ENCODE measurements at regions of chr11 and their contacts with region 1.

Region 1: GRCh38 chr11:62427630-62428233 is 8.9 kb downstream of the SCGB1A1 start:
- DNase-seq: no peak
- H3K4me3 ChIP-seq: no peak overlapping the region
- H3K27ac ChIP-seq: no peak overlapping the region
- H3K4me1 ChIP-seq: no peaks in the 10 kb centered on the region
- H3K27me3 ChIP-seq: peaks cover 0 to 3% of the 10 kb centered on the region in 2 experiments
- CTCF ChIP-seq: no peak
- POLR2A ChIP-seq: no peak

Region 2: GRCh38 chr11:61792310-61793085 is 635.2 kb before region 1 on chr11 and contains the starts of genes FEN1 and TMEM258:
- CTCF ChIA-PET with region 1: no interaction called
- POLR2A ChIA-PET with region 1: no interaction called
- dilution Hi-C with region 1: no loop called
- intact Hi-C with region 1: no loop called
- DNase-seq: peak; percentile 98
- H3K4me3 ChIP-seq: peak within 1 kb of the TSS; percentile 70 to 91 (median 83)
- H3K27ac ChIP-seq: peak within 1 kb of the TSS; percentile 99
- H3K4me1 ChIP-seq: peaks cover 18% of the 10 kb centered on the region
- H3K27me3 ChIP-seq: no peaks in the 10 kb centered on the region
- CTCF ChIP-seq: peak in 1 of 2 donors; percentile 3
- POLR2A ChIP-seq: peak; percentile 90
- total RNA-seq, gene FEN1: 57.9 and 60.5 TPM in 2 replicates
- total RNA-seq, gene TMEM258: 139 and 140 TPM in 2 replicates

Region 3: GRCh38 chr11:62201370-62201769 is 226.4 kb before region 1 on chr11:
- CTCF ChIA-PET with region 1: no interaction called
- POLR2A ChIA-PET with region 1: no interaction called
- dilution Hi-C with region 1: no loop called
- intact Hi-C with region 1: no loop called
- DNase-seq: no peak
- H3K4me3 ChIP-seq: no peak overlapping the region
- H3K27ac ChIP-seq: no peak overlapping the region
- H3K4me1 ChIP-seq: no peaks in the 10 kb centered on the region
- H3K27me3 ChIP-seq: peaks cover 10 to 20% of the 10 kb centered on the region in 2 experiments
- CTCF ChIP-seq: no peak
- POLR2A ChIP-seq: no peak

Region 4: DNA sequence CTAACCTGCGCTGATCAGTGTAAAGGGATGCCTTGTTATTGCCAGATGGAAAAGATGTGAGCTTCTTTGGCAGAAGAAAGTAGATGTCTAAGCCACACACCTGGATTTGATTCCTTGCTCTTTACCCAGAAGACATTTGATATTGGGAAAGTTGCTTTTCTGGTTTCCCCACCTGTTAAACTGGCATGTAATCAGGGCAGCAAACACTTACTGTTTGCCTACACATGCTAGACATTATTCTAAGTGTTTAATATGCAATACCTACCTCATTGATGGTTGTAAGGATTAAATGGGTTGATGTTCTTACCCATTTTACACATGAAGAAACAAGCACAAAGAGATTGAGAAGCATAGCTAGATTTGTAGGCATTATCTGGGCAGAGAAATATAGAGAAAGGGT is 73.9 kb before region 1 on chr11:
- CTCF ChIA-PET with region 1: no interaction called
- POLR2A ChIA-PET with region 1: no interaction called
- dilution Hi-C with region 1: no loop called
- intact Hi-C with region 1: no loop called
- DNase-seq: no peak
- H3K4me3 ChIP-seq: no peak overlapping the region
- H3K27ac ChIP-seq: no peak overlapping the region
- H3K4me1 ChIP-seq: no peaks in the 10 kb centered on the region
- H3K27me3 ChIP-seq: no peaks in the 10 kb centered on the region
- CTCF ChIP-seq: no peak
- POLR2A ChIP-seq: no peak

Region 5: DNA sequence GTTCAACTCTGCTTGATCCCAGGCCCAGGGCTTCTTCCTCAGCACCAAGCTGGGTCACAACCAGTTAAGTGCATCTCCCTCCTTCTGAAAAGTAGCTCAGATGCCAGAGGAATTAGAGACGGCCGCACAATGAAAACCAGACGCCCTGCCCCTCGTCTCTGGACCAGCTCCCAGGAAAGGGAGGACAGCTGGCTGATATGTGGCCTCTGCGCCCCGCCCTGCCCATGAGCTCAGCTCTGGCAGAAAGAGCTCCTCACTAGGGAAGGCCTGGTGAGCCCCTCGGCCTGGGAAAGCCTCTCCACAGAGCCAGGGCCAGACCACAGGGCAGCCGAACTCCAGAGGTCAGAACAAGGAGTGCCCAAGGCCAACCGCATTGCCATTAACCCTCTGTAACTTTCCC is 27.0 kb before region 1 on chr11:
- CTCF ChIA-PET with region 1: interaction called, 65 read pairs
- POLR2A ChIA-PET with region 1: no interaction called
- dilution Hi-C with region 1: no loop called
- intact Hi-C with region 1: no loop called
- DNase-seq: no peak
- H3K4me3 ChIP-seq: no peak overlapping the region
- H3K27ac ChIP-seq: no peak overlapping the region
- H3K4me1 ChIP-seq: no peaks in the 10 kb centered on the region
- H3K27me3 ChIP-seq: no peaks in the 10 kb centered on the region
- CTCF ChIP-seq: no peak
- POLR2A ChIP-seq: no peak

Region 6: GRCh38 chr11:62461740-62462507 is 34.2 kb after region 1 on chr11:
- CTCF ChIA-PET with region 1: interaction called, 13 read pairs
- POLR2A ChIA-PET with region 1: no interaction called
- dilution Hi-C with region 1: no loop called
- intact Hi-C with region 1: no loop called
- DNase-seq: no peak
- H3K4me3 ChIP-seq: no peak overlapping the region
- H3K27ac ChIP-seq: no peak overlapping the region
- H3K4me1 ChIP-seq: no peaks in the 10 kb centered on the region
- H3K27me3 ChIP-seq: no peaks in the 10 kb centered on the region
- CTCF ChIP-seq: no peak
- POLR2A ChIP-seq: no peak

Region 7: GRCh38 chr11:62508268-62509058 is 80.7 kb after region 1 on chr11:
- CTCF ChIA-PET with region 1: interaction called, 64 read pairs
- POLR2A ChIA-PET with region 1: no interaction called
- dilution Hi-C with region 1: no loop called
- intact Hi-C with region 1: no loop called
- DNase-seq: peak; percentile 86
- H3K4me3 ChIP-seq: peak overlapping the region in 1 of 3 experiments; percentile 16
- H3K27ac ChIP-seq: no peak overlapping the region
- H3K4me1 ChIP-seq: peaks cover 3% of the 10 kb centered on the region
- H3K27me3 ChIP-seq: no peaks in the 10 kb centered on the region
- CTCF ChIP-seq: peak; percentile 69 to 81
- POLR2A ChIP-seq: no peak

Region 8: GRCh38 chr11:62573592-62574362 is 146.0 kb after region 1 on chr11 and contains the start of gene EEF1G:
- CTCF ChIA-PET with region 1: interaction called, 26 read pairs
- POLR2A ChIA-PET with region 1: no interaction called
- dilution Hi-C with region 1: no loop called
- intact Hi-C with region 1: no loop called
- DNase-seq: peak; percentile 100
- H3K4me3 ChIP-seq: peak within 1 kb of the TSS; percentile 51 to 85 (median 70)
- H3K27ac ChIP-seq: peak within 1 kb of the TSS; percentile 99
- H3K4me1 ChIP-seq: peaks cover 59% of the 10 kb centered on the region
- H3K27me3 ChIP-seq: no peaks in the 10 kb centered on the region
- CTCF ChIP-seq: no peak
- POLR2A ChIP-seq: peak; percentile 96
- total RNA-seq, gene EEF1G: 1,341 and 1,345 TPM in 2 replicates

Region 9: GRCh38 chr11:62694455-62695167 is 266.9 kb after region 1 on chr11:
- CTCF ChIA-PET with region 1: interaction called, 30 read pairs
- POLR2A ChIA-PET with region 1: no interaction called
- dilution Hi-C with region 1: no loop called
- intact Hi-C with region 1: no loop called
- DNase-seq: peak; percentile 68
- H3K4me3 ChIP-seq: no peak overlapping the region
- H3K27ac ChIP-seq: no peak overlapping the region
- H3K4me1 ChIP-seq: no peaks in the 10 kb centered on the region
- H3K27me3 ChIP-seq: no peaks in the 10 kb centered on the region
- CTCF ChIP-seq: peak; percentile 80 to 83
- POLR2A ChIP-seq: no peak

Region 10: GRCh38 chr11:63274776-63275175 is 847.0 kb after region 1 on chr11:
- CTCF ChIA-PET with region 1: no interaction called
- POLR2A ChIA-PET with region 1: no interaction called
- dilution Hi-C with region 1: no loop called
- intact Hi-C with region 1: no loop called
- DNase-seq: peak; percentile 4
- H3K4me3 ChIP-seq: no peak overlapping the region
- H3K27ac ChIP-seq: no peak overlapping the region
- H3K4me1 ChIP-seq: no peaks in the 10 kb centered on the region
- H3K27me3 ChIP-seq: peaks cover 5 to 9% of the 10 kb centered on the region in 2 experiments
- CTCF ChIP-seq: no peak
- POLR2A ChIP-seq: no peak